OCI-LY7 (cell line): ENCODE measurements at regions of chr22 and their contacts with region 1.

Region 1: GRCh38 chr22:38051900-38052862 is 5.0 kb upstream of the PICK1 start:
- DNase-seq: peak; percentile 92
- H3K4me3 ChIP-seq: no peak overlapping the region
- H3K27ac ChIP-seq: peak overlapping the region; percentile 60
- H3K4me1 ChIP-seq: peaks cover 45% of the 10 kb centered on the region
- CTCF ChIP-seq: peak; percentile 98

Region 2: GRCh38 chr22:38030311-38031133 is 21.7 kb before region 1 on chr22:
- CTCF ChIA-PET with region 1: no interaction called
- POLR2A ChIA-PET with region 1: no interaction called
- intact Hi-C with region 1: no loop called
- DNase-seq: no peak
- H3K4me3 ChIP-seq: no peak overlapping the region
- H3K27ac ChIP-seq: no peak overlapping the region
- H3K4me1 ChIP-seq: peaks cover 12% of the 10 kb centered on the region
- CTCF ChIP-seq: no peak

Region 3: DNA sequence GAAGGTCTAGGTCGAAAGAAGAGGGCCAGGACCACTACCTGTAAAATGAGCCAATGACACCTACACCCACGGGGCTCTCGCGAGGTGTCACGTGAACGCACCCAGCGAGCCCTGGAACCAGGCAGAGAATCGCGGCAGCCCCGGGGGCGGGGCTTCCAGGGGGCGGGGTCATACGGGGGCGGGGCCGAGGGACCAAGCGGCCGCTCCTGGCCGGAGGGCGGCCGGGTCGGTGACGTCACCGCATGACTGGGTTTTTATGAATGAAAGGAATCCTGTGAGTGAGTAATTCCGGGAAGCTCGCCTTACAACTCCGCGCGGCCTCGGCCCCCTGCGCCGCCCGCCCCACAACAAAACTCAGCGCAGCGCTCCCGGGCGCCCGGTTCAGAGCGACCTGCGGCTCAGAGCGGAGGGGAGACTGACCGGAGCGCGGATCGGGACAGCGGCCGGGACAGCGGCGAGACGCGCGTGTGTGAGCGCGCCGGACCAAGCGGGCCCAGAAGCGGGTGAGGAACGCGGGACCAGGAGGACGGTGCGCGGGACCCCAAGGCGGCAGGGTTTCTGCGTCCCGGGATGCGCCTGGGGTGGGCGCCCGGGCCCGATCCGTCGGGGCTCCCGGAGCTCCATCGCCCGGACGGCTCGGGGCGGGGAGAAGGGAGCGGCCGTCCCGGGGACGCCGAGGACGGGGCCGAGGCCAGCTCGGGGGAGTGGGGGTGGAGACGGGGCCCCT is 149.7 kb after region 1 on chr22 and contains the start of gene MAFF:
- CTCF ChIA-PET with region 1: interaction called, 3 read pairs
- POLR2A ChIA-PET with region 1: no interaction called
- intact Hi-C with region 1: loop called (anchors 2 kb)
- DNase-seq: peak; percentile 94
- H3K4me3 ChIP-seq: peak within 1 kb of the TSS; percentile 79
- H3K27ac ChIP-seq: peak within 1 kb of the TSS; percentile 18
- H3K4me1 ChIP-seq: peaks cover 47% of the 10 kb centered on the region
- CTCF ChIP-seq: no peak
- total RNA-seq, gene MAFF: 3.8 and 5.7 TPM in 2 replicates

Region 4: DNA sequence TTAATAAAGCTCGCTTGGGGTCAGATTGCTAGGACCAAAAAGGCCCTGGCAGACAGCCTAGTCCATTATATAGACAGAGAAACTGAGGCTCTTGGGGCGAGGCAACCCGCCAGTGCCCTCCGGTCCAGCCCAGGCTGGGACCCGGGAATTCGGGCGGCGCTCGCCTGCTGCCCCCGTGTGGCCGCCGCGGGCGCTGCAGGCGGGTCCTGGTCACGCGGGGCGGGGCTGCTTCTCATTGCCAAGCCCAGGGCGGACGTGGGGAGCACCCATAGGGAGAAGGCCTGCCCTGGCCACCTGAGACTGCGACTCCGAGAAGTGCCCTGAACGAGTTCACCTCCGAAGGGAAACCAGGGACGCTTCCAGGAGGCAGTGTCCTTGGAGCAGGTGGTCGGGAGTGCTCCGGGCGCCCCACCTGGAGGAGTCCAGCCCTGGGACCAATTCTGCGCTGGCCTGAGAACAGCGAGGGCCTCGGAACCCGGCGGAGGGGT is 301.0 kb after region 1 on chr22:
- CTCF ChIA-PET with region 1: no interaction called
- POLR2A ChIA-PET with region 1: no interaction called
- intact Hi-C with region 1: loop called (anchors 1 kb)
- DNase-seq: peak; percentile 63
- H3K4me3 ChIP-seq: no peak overlapping the region
- H3K27ac ChIP-seq: no peak overlapping the region
- H3K4me1 ChIP-seq: no peaks in the 10 kb centered on the region
- CTCF ChIP-seq: peak; percentile 92

Region 5: DNA sequence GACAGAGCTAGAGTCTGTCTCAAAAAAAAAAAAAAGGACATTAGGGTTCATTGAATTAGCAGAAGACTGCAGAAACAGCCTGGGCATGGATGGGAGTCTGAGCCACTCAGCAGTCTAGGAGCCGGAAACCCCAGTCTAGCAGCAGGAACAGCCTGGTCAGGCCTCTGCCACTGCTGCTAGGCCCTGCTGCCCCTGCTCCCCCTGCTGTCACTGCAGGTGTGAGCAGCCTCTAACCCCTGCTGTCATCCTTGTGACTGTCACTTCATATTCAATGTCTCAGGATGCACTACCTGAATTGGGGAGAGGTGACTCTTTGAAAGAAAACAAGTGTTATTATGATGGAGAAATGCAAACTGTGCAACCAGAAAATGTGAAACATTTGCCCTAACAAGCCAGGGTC is 460.9 kb after region 1 on chr22:
- CTCF ChIA-PET with region 1: no interaction called
- POLR2A ChIA-PET with region 1: no interaction called
- intact Hi-C with region 1: loop called (anchors 2 kb)
- DNase-seq: peak; percentile 75
- H3K4me3 ChIP-seq: no peak overlapping the region
- H3K27ac ChIP-seq: no peak overlapping the region
- H3K4me1 ChIP-seq: peaks cover 4% of the 10 kb centered on the region
- CTCF ChIP-seq: peak; percentile 74

Region 6: DNA sequence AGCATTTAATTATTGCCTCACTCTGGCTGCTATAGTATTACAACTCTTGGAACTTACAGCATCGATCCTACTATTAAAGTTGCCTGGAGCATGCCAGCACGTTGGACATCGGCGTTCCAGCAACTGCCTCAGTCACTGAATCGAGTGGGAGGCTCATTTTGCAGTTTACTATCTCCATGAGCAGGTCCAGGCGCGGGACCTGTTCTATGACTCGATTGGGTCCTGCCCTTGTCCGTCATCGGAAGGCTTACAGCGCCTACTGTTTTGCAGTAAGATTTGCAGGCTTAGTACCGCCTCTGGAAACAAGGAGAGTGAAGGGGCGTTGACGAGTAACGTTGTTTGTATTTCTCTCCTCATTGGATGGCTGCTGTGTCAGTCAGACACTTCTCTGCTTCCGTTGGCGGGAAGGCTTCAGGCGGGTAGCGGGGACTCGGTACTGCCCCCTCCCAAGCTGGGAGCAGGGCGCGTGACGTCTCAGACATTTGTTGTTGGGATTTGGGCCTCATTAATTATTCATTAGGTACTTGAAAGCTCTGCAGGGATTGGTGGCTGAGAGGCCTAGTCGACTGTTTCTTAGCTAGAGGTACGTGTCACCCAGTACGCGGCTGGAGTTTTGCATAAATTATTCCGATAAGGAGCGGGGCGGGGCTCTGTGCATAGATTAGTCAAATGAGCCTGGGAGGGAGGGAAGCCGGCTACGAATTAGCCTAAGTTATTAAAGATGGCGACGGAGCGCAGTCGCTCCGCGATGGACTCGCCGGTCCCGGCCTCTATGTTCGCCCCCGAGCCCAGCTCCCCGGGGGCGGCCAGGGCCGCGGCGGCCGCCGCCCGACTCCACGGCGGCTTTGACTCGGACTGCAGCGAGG is 653.3 kb after region 1 on chr22 and contains the start of gene GTPBP1:
- CTCF ChIA-PET with region 1: no interaction called
- POLR2A ChIA-PET with region 1: no interaction called
- intact Hi-C with region 1: loop called (anchors 10 kb)
- DNase-seq: peak; percentile 100
- H3K4me3 ChIP-seq: peak within 1 kb of the TSS; percentile 97
- H3K27ac ChIP-seq: peak within 1 kb of the TSS; percentile 79
- H3K4me1 ChIP-seq: peaks cover 69% of the 10 kb centered on the region
- CTCF ChIP-seq: no peak
- total RNA-seq, gene GTPBP1: 46.1 and 51.1 TPM in 2 replicates